ENCODE measurements at regions of chr2 and their contacts with region 1.

Region 1: GRCh38 chr2:50529600-50530218 is 502.2 kb downstream of the NRXN1 start:
- DNase-seq: peak; percentile 48
- ATAC-seq: peak; percentile 81
- H3K4me3 ChIP-seq: no peak overlapping the region
- H3K27ac ChIP-seq: no peak overlapping the region
- H3K4me1 ChIP-seq: no peaks in the 10 kb centered on the region
- H3K27me3 ChIP-seq: no peaks in the 10 kb centered on the region
- CTCF ChIP-seq: peak; percentile 72
- EP300 ChIP-seq: no peak
- POLR2A ChIP-seq: no peak
- RAD21 ChIP-seq: no peak

Region 2: DNA sequence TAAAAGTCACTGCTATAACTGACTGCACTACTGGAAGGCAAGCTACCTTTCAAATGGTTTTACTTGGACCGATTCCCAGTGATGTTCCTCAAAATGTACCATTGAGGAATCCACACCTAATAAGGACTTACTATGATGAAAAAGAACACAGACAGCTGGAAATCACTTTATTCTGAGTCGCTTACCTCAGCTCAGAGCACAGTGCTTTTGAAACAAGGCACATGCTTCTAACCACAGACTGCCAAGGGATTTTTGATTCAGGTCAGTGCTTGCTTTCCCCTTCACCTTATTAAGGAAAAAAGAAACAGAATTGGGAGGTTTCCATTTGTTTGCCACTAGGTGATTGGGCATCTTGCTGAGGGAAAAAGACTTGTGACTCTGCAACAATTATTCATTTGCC is 667.9 kb before region 1 on chr2:
- CTCF ChIA-PET with region 1: no interaction called
- POLR2A ChIA-PET with region 1: no interaction called
- in situ Hi-C with region 1: no loop called
- intact Hi-C with region 1: no loop called
- DNase-seq: no peak
- ATAC-seq: no peak
- H3K4me3 ChIP-seq: no peak overlapping the region
- H3K27ac ChIP-seq: no peak overlapping the region
- H3K4me1 ChIP-seq: no peaks in the 10 kb centered on the region
- H3K27me3 ChIP-seq: no peaks in the 10 kb centered on the region
- CTCF ChIP-seq: no peak
- EP300 ChIP-seq: no peak
- POLR2A ChIP-seq: no peak
- RAD21 ChIP-seq: no peak

Region 3: DNA sequence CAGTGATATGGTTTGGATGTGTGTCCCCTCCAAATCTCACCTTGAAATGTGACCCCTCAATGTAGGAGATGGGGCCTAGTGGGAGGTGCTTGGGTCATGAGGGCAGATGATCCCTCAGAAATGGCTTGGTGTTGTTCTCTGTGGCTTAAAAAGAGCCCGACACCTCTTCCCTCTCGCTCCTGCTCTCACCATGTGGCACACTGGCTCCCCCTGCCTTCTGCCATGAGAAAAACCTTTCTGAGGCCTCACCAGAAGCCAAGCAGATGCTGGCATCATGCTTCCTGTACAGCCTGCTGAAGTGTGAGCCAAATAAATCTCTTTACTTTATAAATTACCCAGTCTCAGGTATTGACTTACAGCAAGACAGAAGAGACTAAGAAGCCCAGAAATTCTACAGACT is 145.2 kb after region 1 on chr2:
- CTCF ChIA-PET with region 1: no interaction called
- POLR2A ChIA-PET with region 1: no interaction called
- in situ Hi-C with region 1: no loop called
- intact Hi-C with region 1: loop called (anchors 10 kb)
- DNase-seq: peak; percentile 9
- ATAC-seq: no peak; the same call in 2 of the 3 replicates
- H3K4me3 ChIP-seq: no peak overlapping the region
- H3K27ac ChIP-seq: no peak overlapping the region
- H3K4me1 ChIP-seq: no peaks in the 10 kb centered on the region
- H3K27me3 ChIP-seq: no peaks in the 10 kb centered on the region
- CTCF ChIP-seq: peak; percentile 60
- EP300 ChIP-seq: no peak
- POLR2A ChIP-seq: no peak
- RAD21 ChIP-seq: no peak

Region 4: GRCh38 chr2:51710222-51710621 is 1180.5 kb after region 1 on chr2:
- CTCF ChIA-PET with region 1: no interaction called
- POLR2A ChIA-PET with region 1: no interaction called
- in situ Hi-C with region 1: loop called (anchors 25 kb)
- intact Hi-C with region 1: loop called (anchors 5 kb)
- DNase-seq: peak; percentile 18
- ATAC-seq: peak; percentile 98
- H3K4me3 ChIP-seq: no peak overlapping the region
- H3K27ac ChIP-seq: no peak overlapping the region
- H3K4me1 ChIP-seq: no peaks in the 10 kb centered on the region
- H3K27me3 ChIP-seq: no peaks in the 10 kb centered on the region
- CTCF ChIP-seq: peak; percentile 70
- EP300 ChIP-seq: no peak
- POLR2A ChIP-seq: no peak
- RAD21 ChIP-seq: no peak

Measured in HepG2 (cell line).